ENCODE measurements at regions of chr20 and their contacts with region 1.

Region 1: GRCh38 chr20:23668477-23668951 is 20.3 kb downstream of the CST4 start:
- DNase-seq: peak; percentile 72
- H3K4me3 Mint-ChIP-seq: no peak overlapping the region
- H3K27ac Mint-ChIP-seq: no peak overlapping the region
- H3K4me1 Mint-ChIP-seq: no peaks in the 10 kb centered on the region
- H3K27me3 Mint-ChIP-seq: no peaks in the 10 kb centered on the region
- CTCF ChIP-seq: peak; percentile 93

Region 2: DNA sequence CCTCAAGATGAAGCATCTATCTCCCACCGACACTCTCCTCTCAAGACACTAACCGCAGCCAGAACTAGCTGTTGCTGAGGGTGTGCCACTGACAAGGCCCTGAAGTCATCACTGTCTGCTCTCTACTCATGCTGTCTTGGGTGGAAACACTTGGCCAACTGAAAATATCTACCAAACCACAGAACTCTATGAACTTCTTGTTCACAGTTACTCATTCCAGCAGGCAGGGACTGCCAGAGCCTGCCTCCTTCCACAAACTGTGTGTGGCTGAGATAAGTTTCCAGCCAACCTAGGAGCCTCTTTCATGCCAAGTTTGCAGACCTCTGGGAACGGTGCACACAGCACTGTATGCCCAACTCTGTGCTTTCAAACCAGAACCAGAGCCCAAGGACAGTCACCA is 363.4 kb before region 1 on chr20:
- CTCF ChIA-PET with region 1: no interaction called
- POLR2A ChIA-PET with region 1: no interaction called
- intact Hi-C with region 1: no loop called
- DNase-seq: no peak
- H3K4me3 Mint-ChIP-seq: no peak overlapping the region
- H3K27ac Mint-ChIP-seq: peak overlapping the region; percentile 37
- H3K4me1 Mint-ChIP-seq: peaks cover 13% of the 10 kb centered on the region
- H3K27me3 Mint-ChIP-seq: no peaks in the 10 kb centered on the region
- CTCF ChIP-seq: no peak

Region 3: DNA sequence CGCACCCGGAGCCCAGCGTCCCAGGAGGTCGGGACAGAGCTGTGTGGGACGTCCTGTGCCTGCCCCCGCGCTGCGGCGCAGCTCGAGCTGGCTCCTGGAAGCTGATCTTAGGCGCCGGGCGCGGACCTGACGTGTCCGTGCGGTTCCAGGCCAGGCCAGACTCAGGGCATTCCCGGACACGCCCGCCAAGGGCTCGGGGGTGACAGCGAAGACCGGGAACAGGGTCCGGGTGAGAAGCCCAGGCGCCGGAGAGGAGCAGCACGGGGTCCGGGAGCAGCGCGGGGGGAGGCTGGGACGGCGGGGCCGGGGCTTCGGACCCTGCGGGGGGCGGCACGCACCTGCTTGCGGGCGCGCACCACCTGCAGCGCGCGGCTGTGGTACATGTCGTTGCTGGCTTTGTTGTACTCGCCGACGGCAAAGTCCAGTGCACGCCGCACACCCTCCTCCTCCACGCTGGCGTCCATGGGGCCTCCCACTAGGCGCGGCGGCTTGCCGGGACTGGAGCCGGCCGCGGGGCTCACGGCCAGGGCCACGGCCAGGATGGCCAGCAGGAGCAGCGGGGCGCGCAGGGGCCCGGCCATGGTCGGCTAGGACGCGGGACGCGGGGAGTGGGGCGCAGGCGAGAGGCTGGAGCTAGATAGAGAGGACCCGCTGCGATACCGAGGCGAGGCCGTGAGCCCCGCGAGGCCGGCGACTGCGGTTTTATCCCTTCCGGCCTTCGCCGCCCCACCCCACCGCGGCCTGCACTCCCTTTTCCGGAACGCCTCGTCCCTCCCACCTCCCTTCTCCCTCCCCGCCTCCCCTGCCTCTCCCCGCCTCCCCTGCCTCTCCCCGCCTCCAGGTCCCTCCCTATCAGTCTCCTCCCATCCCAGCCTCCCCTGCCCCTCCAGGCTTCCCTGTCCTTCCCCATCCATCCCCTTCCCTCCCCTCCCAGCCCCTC is 31.0 kb before region 1 on chr20 and contains the start of gene CST3:
- CTCF ChIA-PET with region 1: interaction called, 10 read pairs
- POLR2A ChIA-PET with region 1: interaction called, 3 read pairs
- intact Hi-C with region 1: no loop called
- DNase-seq: peak; percentile 91
- H3K4me3 Mint-ChIP-seq: peak within 1 kb of the TSS; percentile 91
- H3K27ac Mint-ChIP-seq: peak within 1 kb of the TSS; percentile 90
- H3K4me1 Mint-ChIP-seq: peaks cover 42% of the 10 kb centered on the region
- H3K27me3 Mint-ChIP-seq: no peaks in the 10 kb centered on the region
- CTCF ChIP-seq: no peak
- total RNA-seq, gene CST3: 303 and 315 TPM in 2 replicates

Region 4: DNA sequence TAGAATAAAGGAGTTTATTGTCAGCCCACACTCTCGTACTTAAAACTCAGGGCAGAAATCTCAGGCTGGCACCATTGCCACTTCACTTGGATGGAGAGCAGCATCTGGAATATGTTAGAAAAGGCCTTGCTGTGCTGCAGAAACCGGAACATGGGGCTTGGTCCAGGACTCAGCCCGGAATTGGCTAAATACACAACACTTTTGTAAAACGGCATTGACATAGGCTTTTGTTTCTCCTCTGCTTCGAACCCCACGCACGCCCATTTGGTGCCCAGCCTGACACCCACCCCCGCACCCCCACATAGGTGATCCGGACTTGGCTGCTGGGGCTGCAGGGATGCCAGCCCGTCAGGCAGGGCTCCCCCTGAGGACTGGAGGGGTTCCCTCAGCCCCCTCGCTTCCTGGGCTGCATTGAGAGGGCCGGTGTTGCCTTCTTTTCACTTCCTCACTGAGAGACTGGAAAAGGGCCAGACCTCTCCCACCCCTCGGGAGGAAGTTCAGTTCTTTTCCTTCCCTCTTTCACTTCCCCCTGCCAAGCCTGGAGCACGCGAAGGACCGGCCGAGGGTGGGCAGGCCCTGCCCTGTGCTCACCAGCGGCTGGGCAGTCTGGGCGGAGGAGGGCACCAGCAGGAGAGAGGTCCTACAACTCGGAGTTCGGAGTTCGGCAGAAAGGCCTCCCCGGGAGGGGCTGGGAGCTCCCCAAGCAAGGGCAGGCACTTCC is 12.9 kb before region 1 on chr20:
- CTCF ChIA-PET with region 1: interaction called, 74 read pairs
- POLR2A ChIA-PET with region 1: no interaction called
- intact Hi-C with region 1: no loop called
- DNase-seq: no peak
- H3K4me3 Mint-ChIP-seq: no peak overlapping the region
- H3K27ac Mint-ChIP-seq: peak overlapping the region; percentile 35
- H3K4me1 Mint-ChIP-seq: no peaks in the 10 kb centered on the region
- H3K27me3 Mint-ChIP-seq: no peaks in the 10 kb centered on the region
- CTCF ChIP-seq: no peak

Region 5: DNA sequence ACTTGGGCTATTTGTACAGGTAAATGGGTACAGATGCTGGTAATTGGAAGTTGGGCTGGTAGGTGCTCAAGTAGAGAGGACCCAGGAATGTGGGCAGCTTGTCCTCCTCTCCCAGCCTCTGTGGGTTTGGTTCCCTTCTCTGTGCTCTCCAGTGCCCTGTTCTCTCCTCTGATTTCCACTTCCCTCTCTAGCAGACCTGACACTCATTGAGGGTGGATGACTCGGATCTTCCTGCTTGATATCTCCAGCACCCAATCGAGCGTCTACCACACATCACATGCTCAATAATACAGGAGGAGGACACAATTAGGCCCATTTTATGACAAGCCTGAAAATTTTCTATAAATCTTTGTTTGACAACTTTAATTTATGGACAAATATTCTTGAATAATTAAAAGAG is 58.5 kb after region 1 on chr20:
- CTCF ChIA-PET with region 1: no interaction called
- POLR2A ChIA-PET with region 1: no interaction called
- intact Hi-C with region 1: loop called (anchors 10 kb)
- DNase-seq: no peak
- H3K4me3 Mint-ChIP-seq: no peak overlapping the region
- H3K27ac Mint-ChIP-seq: no peak overlapping the region
- H3K4me1 Mint-ChIP-seq: no peaks in the 10 kb centered on the region
- H3K27me3 Mint-ChIP-seq: no peaks in the 10 kb centered on the region
- CTCF ChIP-seq: no peak

Region 6: GRCh38 chr20:23826541-23827021 is 158.1 kb after region 1 on chr20 and contains the start of gene CST2:
- CTCF ChIA-PET with region 1: no interaction called
- POLR2A ChIA-PET with region 1: no interaction called
- intact Hi-C with region 1: no loop called
- DNase-seq: no peak
- H3K4me3 Mint-ChIP-seq: no peak within 1 kb of the TSS
- H3K27ac Mint-ChIP-seq: no peak within 1 kb of the TSS
- H3K4me1 Mint-ChIP-seq: no peaks in the 10 kb centered on the region
- H3K27me3 Mint-ChIP-seq: no peaks in the 10 kb centered on the region
- CTCF ChIP-seq: no peak
- total RNA-seq, gene CST2: not detected in 2 replicates

Region 7: DNA sequence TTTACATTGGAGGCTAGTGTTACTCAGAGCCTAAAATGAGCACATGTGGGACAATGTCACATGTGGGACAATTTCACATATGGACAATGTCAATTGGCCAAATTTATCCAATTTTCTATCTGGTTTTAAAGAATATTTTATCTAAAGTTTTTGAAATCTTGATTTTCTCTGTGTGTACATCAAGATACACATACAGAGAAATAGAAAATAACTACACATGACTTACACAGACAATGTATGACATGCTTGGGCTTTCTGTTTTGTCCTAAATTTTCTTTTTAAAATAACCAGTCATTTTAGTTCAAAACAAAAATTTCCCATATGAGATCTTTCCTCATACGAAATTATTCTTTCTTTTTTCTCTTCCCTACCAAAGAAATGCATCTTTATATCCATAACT is 295.4 kb after region 1 on chr20:
- CTCF ChIA-PET with region 1: no interaction called
- POLR2A ChIA-PET with region 1: no interaction called
- intact Hi-C with region 1: no loop called
- DNase-seq: no peak
- H3K4me3 Mint-ChIP-seq: no peak overlapping the region
- H3K27ac Mint-ChIP-seq: no peak overlapping the region
- H3K4me1 Mint-ChIP-seq: no peaks in the 10 kb centered on the region
- H3K27me3 Mint-ChIP-seq: no peaks in the 10 kb centered on the region
- CTCF ChIP-seq: no peak

Region 8: GRCh38 chr20:24001712-24002405 is 333.3 kb after region 1 on chr20:
- CTCF ChIA-PET with region 1: interaction called, 49 read pairs
- POLR2A ChIA-PET with region 1: no interaction called
- intact Hi-C with region 1: no loop called
- DNase-seq: no peak
- H3K4me3 Mint-ChIP-seq: no peak overlapping the region
- H3K27ac Mint-ChIP-seq: no peak overlapping the region
- H3K4me1 Mint-ChIP-seq: no peaks in the 10 kb centered on the region
- H3K27me3 Mint-ChIP-seq: no peaks in the 10 kb centered on the region
- CTCF ChIP-seq: no peak